PC-9 (cell line): ENCODE measurements at regions of chr11 and their contacts with region 1.

Region 1: DNA sequence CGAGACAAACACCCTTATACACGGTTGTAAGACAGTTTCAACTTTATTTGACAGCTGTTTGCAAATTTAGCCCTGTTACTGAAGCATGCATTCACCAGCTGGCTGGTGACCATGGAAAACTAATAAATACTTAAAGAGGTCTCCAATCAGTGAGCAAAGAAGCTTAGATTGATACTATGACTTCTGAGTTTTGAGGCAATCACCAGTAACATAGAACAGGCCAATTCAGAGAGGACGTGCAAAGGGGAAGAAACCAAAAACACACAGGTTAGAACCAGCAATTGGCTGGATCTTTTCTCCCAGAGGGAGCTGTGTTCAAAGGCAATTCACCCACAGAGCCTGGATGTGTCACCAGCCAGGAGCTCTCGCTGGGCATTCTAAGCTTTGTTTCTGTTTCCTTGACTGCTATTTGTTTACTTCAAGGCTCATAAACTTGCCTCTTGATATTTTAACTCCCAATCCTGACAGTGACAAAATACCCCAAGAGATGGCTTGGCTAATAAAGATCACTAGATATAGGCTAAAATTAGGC is 113.6 kb upstream of the MTMR2 start:
- DNase-seq: peak; percentile 66 to 100
- H3K4me3 ChIP-seq: peak overlapping the region; percentile 38; the same call in 1 of the 2 replicates
- H3K27ac ChIP-seq: peak overlapping the region; percentile 95
- H3K4me1 ChIP-seq: peaks cover 79% of the 10 kb centered on the region
- H3K27me3 ChIP-seq: no peaks in the 10 kb centered on the region
- CTCF ChIP-seq: no peak

Region 2: GRCh38 chr11:95884376-95884775 is 153.1 kb before region 1 on chr11:
- CTCF ChIA-PET with region 1: no interaction called
- POLR2A ChIA-PET with region 1: no interaction called
- intact Hi-C with region 1: no loop called
- DNase-seq: peak in 1 of 2 experiments; percentile 32
- H3K4me3 ChIP-seq: no peak overlapping the region
- H3K27ac ChIP-seq: 0 out of 2 replicates have a peak overlapping the region, but pooled peaks have one; percentile 4
- H3K4me1 ChIP-seq: no peaks in the 10 kb centered on the region; the same call in 1 of the 2 replicates
- H3K27me3 ChIP-seq: no peaks in the 10 kb centered on the region
- CTCF ChIP-seq: no peak

Region 3: GRCh38 chr11:95923728-95924413 is 113.6 kb before region 1 on chr11 and contains the start of gene MTMR2:
- CTCF ChIA-PET with region 1: no interaction called
- POLR2A ChIA-PET with region 1: interaction called, 14 read pairs
- intact Hi-C with region 1: loop called (anchors 1 kb)
- DNase-seq: peak; percentile 72 to 77
- H3K4me3 ChIP-seq: peak within 1 kb of the TSS; percentile 67
- H3K27ac ChIP-seq: peak within 1 kb of the TSS; percentile 97
- H3K4me1 ChIP-seq: peaks cover 37% of the 10 kb centered on the region
- H3K27me3 ChIP-seq: no peaks in the 10 kb centered on the region
- CTCF ChIP-seq: no peak
- total RNA-seq, gene MTMR2: 41.6 and 60.7 TPM in 2 replicates

Region 4: GRCh38 chr11:96012086-96012824 is 25.2 kb before region 1 on chr11:
- CTCF ChIA-PET with region 1: interaction called, 3 read pairs
- POLR2A ChIA-PET with region 1: interaction called, 3 read pairs
- intact Hi-C with region 1: loop called (anchors 1 kb)
- DNase-seq: peak; percentile 53 to 65
- H3K4me3 ChIP-seq: no peak overlapping the region
- H3K27ac ChIP-seq: no peak overlapping the region
- H3K4me1 ChIP-seq: peaks cover 24% of the 10 kb centered on the region
- H3K27me3 ChIP-seq: no peaks in the 10 kb centered on the region
- CTCF ChIP-seq: peak; percentile 21; the same call in 1 of the 2 replicates

Region 5: DNA sequence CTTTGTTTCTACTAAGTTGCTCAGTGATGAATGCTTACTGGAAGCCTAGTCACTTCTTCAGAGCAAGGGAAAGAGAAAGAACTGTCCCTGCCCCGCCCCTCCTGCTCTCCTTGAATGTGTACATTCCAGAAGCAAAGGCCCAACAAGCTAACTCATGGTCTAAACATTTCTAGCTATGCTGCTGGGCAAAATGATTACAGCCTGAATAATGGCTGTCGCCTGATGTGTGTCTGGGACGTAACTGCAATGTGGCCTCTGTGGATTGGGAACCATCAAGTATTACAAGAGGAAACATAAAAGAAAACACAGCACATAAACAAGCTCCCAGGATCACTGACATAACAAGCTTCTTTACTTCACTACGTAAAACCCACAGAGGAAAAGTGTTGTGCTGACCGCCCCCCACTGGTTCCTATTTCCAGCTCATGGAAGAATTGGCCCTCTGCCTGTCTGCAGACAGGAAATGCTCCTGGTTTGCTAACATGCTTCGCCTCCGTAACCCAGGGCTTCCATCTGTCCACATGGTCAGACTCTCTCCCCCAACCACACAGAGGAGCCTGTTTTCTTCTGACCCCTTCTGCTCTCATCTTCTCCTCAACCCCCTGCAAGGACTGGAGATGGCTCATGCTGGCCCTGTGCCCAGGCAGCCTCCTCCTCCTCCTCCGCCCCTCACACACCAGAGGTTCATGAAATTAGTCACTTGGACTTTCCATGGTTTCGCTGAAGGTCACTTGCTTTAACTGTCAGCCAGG is 118.3 kb after region 1 on chr11:
- CTCF ChIA-PET with region 1: no interaction called
- POLR2A ChIA-PET with region 1: interaction called, 8 read pairs
- intact Hi-C with region 1: loop called (anchors 1 kb)
- DNase-seq: peak; percentile 80 to 95
- H3K4me3 ChIP-seq: no peak overlapping the region
- H3K27ac ChIP-seq: peak overlapping the region; percentile 73
- H3K4me1 ChIP-seq: peaks cover 45% of the 10 kb centered on the region
- H3K27me3 ChIP-seq: no peaks in the 10 kb centered on the region
- CTCF ChIP-seq: no peak; the same call in 1 of the 2 replicates